BJ (cell line): ENCODE measurements at regions of chr9 and their contacts with region 1.

Region 1: DNA sequence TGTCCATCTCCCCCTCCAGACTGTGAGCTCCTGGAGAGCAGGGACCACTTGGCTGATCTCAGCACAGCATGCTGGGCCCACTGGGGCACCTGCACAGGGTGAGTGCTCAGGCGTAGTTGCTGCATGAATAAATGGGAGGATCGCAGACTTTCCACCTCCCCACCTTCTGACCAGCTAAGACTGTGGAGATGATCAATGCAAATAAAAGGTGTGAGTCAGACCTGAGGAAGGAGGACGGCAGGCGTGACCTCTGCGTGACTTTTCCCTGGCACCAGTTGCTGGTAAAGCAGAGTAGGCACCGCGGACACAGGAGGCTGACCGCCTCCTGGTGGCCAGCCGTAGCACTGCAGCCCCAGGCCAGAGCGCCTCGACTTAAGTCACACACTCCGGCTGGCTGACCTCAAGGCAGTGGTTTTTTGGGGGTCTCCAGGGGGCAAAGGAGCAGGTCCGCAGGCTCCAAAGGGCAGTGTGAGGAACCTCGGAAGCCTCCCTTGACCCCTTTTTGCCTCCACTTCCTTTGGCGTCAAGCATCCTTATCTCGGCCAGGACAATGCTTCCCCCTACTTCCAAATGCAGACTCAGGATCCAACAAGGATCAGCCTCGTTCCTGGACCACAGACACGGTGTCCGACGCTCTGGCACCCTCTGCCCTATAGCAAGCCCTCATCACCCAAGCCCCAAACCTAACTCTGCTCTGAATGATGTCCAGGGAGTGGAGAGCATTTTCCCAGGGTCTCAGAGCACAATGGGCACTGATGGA is 12.7 kb upstream of the TDRD7 start:
- DNase-seq: no peak
- H3K4me3 ChIP-seq: no peak overlapping the region
- H3K27me3 ChIP-seq: no peaks in the 10 kb centered on the region; the same call in 1 of the 2 replicates
- CTCF ChIP-seq: peak; percentile 98

Region 2: GRCh38 chr9:97362266-97363160 is 36.7 kb before region 1 on chr9:
- CTCF ChIA-PET with region 1: no interaction called
- POLR2A ChIA-PET with region 1: no interaction called
- DNase-seq: no peak
- H3K4me3 ChIP-seq: no peak overlapping the region
- H3K27me3 ChIP-seq: no peaks in the 10 kb centered on the region
- CTCF ChIP-seq: no peak

Region 3: GRCh38 chr9:97411789-97412625 is 12.8 kb after region 1 on chr9 and contains the start of gene TDRD7:
- CTCF ChIA-PET with region 1: interaction called, 19 read pairs
- POLR2A ChIA-PET with region 1: no interaction called
- DNase-seq: no peak
- H3K4me3 ChIP-seq: peak within 1 kb of the TSS; percentile 88
- H3K27me3 ChIP-seq: peaks cover 11% of the 10 kb centered on the region
- CTCF ChIP-seq: peak; percentile 89
- polyA plus RNA-seq, gene TDRD7: 5.4 and 9.4 TPM in 2 replicates

Region 4: GRCh38 chr9:97441729-97442128 is 42.5 kb after region 1 on chr9:
- CTCF ChIA-PET with region 1: no interaction called
- POLR2A ChIA-PET with region 1: no interaction called
- DNase-seq: no peak
- H3K4me3 ChIP-seq: no peak overlapping the region
- H3K27me3 ChIP-seq: no peaks in the 10 kb centered on the region
- CTCF ChIP-seq: no peak

Region 5: DNA sequence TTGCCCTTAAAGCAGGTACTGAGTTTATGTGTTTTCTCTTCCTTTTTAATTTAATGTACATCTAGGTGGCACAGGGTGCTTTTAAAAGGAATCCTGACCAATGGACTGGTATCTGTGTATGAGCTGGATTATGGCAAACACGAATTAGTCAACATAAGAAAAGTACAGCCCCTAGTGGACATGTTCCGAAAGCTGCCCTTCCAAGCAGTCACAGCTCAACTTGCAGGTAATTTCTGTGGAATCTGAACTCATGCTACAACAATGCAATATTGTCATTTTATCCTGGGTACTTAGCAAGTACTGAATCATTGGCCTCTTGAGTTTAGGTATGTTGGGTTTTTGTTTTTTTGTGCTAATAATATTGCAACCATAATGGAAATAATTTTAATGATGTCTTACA is 87.9 kb after region 1 on chr9:
- CTCF ChIA-PET with region 1: no interaction called
- POLR2A ChIA-PET with region 1: no interaction called
- DNase-seq: no peak
- H3K4me3 ChIP-seq: no peak overlapping the region
- H3K27me3 ChIP-seq: no peaks in the 10 kb centered on the region
- CTCF ChIP-seq: peak; percentile 28

Region 6: GRCh38 chr9:97570899-97571298 is 171.7 kb after region 1 on chr9:
- CTCF ChIA-PET with region 1: no interaction called
- POLR2A ChIA-PET with region 1: no interaction called
- DNase-seq: no peak
- H3K4me3 ChIP-seq: no peak overlapping the region
- H3K27me3 ChIP-seq: peaks cover 2% of the 10 kb centered on the region; the same call in 1 of the 2 replicates
- CTCF ChIP-seq: no peak